ENCODE measurements at regions of chr3 and their contacts with region 1.

Region 1: DNA sequence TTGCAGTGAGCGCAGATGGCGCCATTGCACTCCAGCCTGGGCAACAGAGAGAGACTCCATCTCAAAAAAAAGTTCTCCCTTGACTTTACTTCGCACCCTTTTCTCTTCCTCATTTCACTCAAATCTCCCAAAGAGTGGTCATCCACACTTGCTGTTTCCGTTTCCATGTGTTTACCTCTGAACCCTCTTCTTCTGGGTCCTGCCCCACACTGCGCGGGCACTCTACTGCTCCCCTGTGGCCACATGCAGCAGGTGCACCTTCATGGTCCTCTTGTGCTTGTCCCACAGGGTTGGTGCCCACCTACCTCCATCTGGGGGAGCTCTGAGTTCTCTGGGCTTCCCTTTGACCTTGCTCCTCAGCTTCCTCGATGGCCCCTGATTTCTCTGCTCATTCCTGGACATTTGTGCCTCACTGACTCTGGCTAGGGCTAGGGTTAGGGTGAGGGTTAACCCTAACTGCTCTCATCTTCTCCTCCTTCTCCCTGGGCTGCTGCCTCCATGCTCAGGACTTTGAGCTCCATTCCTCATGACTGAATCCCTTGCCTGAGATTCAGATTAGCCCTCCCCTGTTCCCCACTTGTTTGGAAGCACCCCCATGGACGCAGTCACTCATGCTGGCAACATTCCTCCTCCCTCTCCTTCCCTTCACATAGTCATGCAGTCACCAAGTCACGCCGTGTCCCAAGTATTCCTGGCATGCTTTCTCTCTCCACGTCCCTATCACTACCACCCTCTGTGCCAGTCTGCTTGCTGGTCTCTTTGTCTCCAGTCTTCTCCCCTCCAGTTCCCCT is 26.6 kb upstream of the KY start:
- DNase-seq: peak; percentile 80
- ATAC-seq: peak; percentile 100
- H3K4me3 Mint-ChIP-seq: no peak overlapping the region
- H3K27ac Mint-ChIP-seq: no peak overlapping the region
- H3K4me1 Mint-ChIP-seq: no peaks in the 10 kb centered on the region; the same call in 1 of the 2 replicates
- H3K27me3 Mint-ChIP-seq: peaks cover 11% of the 10 kb centered on the region
- CTCF ChIP-seq: peak; percentile 69

Region 2: GRCh38 chr3:134326760-134327593 is 350.4 kb before region 1 on chr3:
- CTCF ChIA-PET with region 1: no interaction called
- POLR2A ChIA-PET with region 1: no interaction called
- DNase-seq: peak; percentile 59
- ATAC-seq: peak; percentile 83
- H3K4me3 Mint-ChIP-seq: no peak overlapping the region
- H3K27ac Mint-ChIP-seq: peak overlapping the region; percentile 95
- H3K4me1 Mint-ChIP-seq: peaks cover 58% of the 10 kb centered on the region
- H3K27me3 Mint-ChIP-seq: no peaks in the 10 kb centered on the region; the same call in 1 of the 2 replicates
- CTCF ChIP-seq: no peak

Region 3: DNA sequence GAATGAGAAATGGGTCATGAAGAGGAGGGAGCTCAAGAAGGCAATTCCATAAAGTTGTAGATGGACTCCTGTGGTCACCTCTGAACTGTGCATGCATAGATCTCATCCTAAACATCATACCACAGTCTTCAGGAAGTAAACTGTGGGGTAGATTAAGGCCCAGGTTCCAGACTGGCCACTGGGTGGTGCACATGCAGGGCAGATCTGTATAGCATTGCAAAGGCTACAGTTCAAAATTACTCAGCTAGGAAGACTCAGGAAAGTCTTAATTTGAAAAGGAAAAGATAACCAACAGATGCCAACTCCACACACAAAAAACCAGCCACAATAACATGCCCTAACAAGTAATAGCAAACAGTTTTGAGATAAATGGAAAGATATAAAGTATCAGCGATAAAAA is 46.9 kb before region 1 on chr3:
- CTCF ChIA-PET with region 1: interaction called, 10 read pairs
- POLR2A ChIA-PET with region 1: no interaction called
- DNase-seq: no peak
- ATAC-seq: peak; percentile 85
- H3K4me3 Mint-ChIP-seq: no peak overlapping the region
- H3K27ac Mint-ChIP-seq: no peak overlapping the region
- H3K4me1 Mint-ChIP-seq: peaks cover 6% of the 10 kb centered on the region; the same call in 1 of the 2 replicates
- H3K27me3 Mint-ChIP-seq: no peaks in the 10 kb centered on the region; the same call in 1 of the 2 replicates
- CTCF ChIP-seq: no peak

Region 4: DNA sequence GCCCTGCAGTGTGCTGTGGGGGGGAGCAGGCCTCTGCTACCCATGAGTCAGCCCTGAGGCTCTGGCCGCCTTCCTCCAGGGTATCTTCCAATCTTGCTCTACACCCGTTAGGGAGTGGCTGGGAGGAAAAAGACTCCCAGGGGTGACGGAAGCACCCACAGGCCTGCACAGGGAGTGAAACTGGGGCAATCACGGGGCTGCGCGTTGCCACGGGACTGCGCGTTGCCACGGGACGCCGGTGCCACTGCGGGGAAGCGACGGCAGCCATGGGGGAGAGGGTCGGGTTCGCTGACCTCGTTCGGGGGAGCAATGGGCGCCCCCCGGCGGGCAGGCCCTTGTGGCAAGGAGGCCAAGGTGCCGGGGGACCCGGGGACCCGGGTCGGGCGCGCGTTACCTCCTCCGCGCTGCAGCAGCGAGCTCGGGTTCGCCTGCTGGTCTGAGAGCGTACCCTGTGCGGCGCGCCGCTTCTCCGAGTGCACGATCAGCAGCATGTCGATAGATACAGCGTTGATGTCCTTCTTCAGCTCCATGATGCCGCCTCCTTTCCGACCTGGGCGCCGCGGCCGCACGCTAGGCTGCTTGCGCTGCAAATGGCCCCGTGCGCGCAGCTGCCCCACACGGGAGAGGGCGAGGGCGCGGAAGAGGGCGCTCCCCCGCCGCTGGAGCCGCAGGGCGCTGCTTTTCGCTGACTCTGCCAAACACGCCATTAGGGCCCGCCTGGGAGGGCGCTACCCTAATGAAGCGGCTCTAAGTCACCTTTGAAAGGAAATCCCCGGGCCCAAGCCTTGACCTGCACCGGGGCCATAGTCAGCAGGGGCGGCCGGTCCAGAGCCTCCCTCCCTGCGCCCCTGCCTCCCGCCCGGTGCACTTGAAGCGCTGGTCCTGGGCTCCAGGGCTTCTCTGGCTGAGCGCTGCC is 26.7 kb before region 1 on chr3 and contains the start of gene KY:
- CTCF ChIA-PET with region 1: interaction called, 18 read pairs
- POLR2A ChIA-PET with region 1: no interaction called
- DNase-seq: peak; percentile 69
- ATAC-seq: peak; percentile 84
- H3K4me3 Mint-ChIP-seq: peak within 1 kb of the TSS; percentile 68
- H3K27ac Mint-ChIP-seq: no peak within 1 kb of the TSS
- H3K4me1 Mint-ChIP-seq: peaks cover 11% of the 10 kb centered on the region
- H3K27me3 Mint-ChIP-seq: peaks cover 100% of the 10 kb centered on the region
- CTCF ChIP-seq: no peak; the same call in 1 of the 2 replicates
- total RNA-seq, gene KY: not detected in 3 replicates

Region 5: GRCh38 chr3:134754768-134755559 is 77.6 kb after region 1 on chr3:
- CTCF ChIA-PET with region 1: interaction called, 21 read pairs
- POLR2A ChIA-PET with region 1: no interaction called
- DNase-seq: peak; percentile 85
- ATAC-seq: peak; percentile 97
- H3K4me3 Mint-ChIP-seq: no peak overlapping the region
- H3K27ac Mint-ChIP-seq: no peak overlapping the region
- H3K4me1 Mint-ChIP-seq: no peaks in the 10 kb centered on the region
- H3K27me3 Mint-ChIP-seq: no peaks in the 10 kb centered on the region; the same call in 1 of the 2 replicates
- CTCF ChIP-seq: peak; percentile 75

Measured in WTC11 (cell line).